Adrenal gland (tissue), 19 donors: ENCODE measurements at regions of chr3 and their contacts with region 1.

Region 1: GRCh38 chr3:14467814-14468620 is 65.6 kb downstream of the SLC6A6 start:
- DNase-seq: peak in 3 of 7 donors; percentile 42 to 56 (median 55)
- H3K4me3 ChIP-seq: no peak overlapping the region
- H3K27ac ChIP-seq: peak overlapping the region in 1 of 5 donors; percentile 12
- H3K4me1 ChIP-seq: peaks cover 7 to 17% of the 10 kb centered on the region in 2 donors
- H3K27me3 ChIP-seq: no peaks in the 10 kb centered on the region
- CTCF ChIP-seq: peak; percentile 81 to 94 (median 88)
- POLR2A ChIP-seq: no peak

Region 2: DNA sequence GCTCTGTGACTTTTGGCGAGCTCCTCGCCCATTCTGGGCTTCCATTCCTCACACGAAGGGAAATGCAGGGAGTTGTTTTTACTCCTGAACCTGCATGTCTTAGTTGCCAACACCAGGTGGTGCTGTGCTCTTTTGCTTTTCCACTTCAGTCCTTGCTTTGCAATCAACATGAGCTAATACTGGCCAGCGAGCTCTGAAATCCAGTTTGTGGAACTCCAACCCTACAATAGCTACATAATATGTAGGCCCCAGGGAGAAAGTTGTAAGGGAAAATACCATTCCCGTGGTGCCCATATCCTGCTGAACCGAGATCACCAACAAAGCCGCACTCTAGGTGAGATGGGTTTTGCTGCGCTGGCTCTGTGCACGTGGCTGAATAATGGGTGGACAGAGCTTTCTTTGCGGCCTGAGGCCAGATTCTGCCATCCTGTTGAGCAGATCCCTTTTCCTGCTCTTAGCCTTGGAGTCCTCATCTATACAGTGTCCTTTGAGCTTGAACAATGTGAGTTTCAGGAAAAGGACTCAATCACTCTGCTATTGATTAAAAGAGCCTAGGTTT is 264.4 kb before region 1 on chr3:
- intact Hi-C with region 1: loop called (anchors 5 kb)
- DNase-seq: peak; percentile 72 to 90 (median 80)
- H3K4me3 ChIP-seq: no peak overlapping the region
- H3K27ac ChIP-seq: peak overlapping the region in 4 of 5 donors; percentile 80 to 98 (median 88)
- H3K4me1 ChIP-seq: peaks cover 14 to 29% of the 10 kb centered on the region in 2 donors
- H3K27me3 ChIP-seq: no peaks in the 10 kb centered on the region
- CTCF ChIP-seq: peak; percentile 84 to 94 (median 90)
- POLR2A ChIP-seq: no peak

Region 3: GRCh38 chr3:14261229-14261628 is 206.8 kb before region 1 on chr3:
- intact Hi-C with region 1: loop called (anchors 5 kb)
- DNase-seq: peak; percentile 80 to 94 (median 86)
- H3K4me3 ChIP-seq: no peak overlapping the region
- H3K27ac ChIP-seq: no peak overlapping the region
- H3K4me1 ChIP-seq: no peaks in the 10 kb centered on the region
- H3K27me3 ChIP-seq: no peaks in the 10 kb centered on the region
- CTCF ChIP-seq: peak; percentile 92 to 98 (median 96)
- POLR2A ChIP-seq: no peak

Region 4: GRCh38 chr3:14402304-14402811 is 65.7 kb before region 1 on chr3 and contains the start of gene SLC6A6:
- intact Hi-C with region 1: loop called (anchors 5 kb)
- DNase-seq: peak; percentile 95 to 99 (median 97)
- H3K4me3 ChIP-seq: peak within 1 kb of the TSS; percentile 38 to 69 (median 52)
- H3K27ac ChIP-seq: peak within 1 kb of the TSS; percentile 75 to 96 (median 91)
- H3K4me1 ChIP-seq: peaks cover 30 to 42% of the 10 kb centered on the region in 2 donors
- H3K27me3 ChIP-seq: no peaks in the 10 kb centered on the region
- CTCF ChIP-seq: peak in 5 of 6 experiments; percentile 42 to 72 (median 60)
- POLR2A ChIP-seq: peak; percentile 79 to 95
- total RNA-seq, gene SLC6A6: 35.8 to 197 (median 89.4) TPM